ENCODE measurements at regions of chr20 and their contacts with region 1.

Region 1: GRCh38 chr20:3767427-3768341 is at the start of gene ADISSP:
- DNase-seq: peak; percentile 100
- total RNA-seq, gene ADISSP: 9.9 TPM

Region 2: GRCh38 chr20:3710703-3711483 is 56.8 kb before region 1 on chr20:
- intact Hi-C with region 1: loop called (anchors 5 kb)
- DNase-seq: peak; percentile 86

Region 3: DNA sequence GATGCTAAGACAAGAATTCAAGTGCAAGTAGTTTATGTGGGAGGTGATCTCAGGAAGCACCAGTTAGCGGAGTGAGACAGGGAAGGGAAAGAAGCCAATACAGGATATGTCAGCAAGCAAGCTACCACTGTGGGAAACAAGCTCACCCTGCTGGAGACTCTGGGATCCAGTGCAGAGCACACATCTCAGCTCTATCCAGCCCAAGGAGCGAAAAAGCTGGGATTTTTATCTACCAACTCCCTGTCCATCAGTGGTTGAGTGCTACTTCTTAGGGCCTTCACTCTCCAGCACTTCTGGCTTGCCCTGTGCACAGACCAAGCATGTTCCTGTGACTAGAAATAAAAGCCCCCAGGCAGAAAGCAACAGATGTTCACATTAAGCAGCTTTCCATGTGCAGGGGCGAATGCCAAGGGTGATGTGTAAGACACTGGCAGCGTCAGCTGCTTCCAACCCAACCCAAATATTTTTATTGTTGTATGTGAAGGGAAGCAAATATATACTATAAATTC is 258.5 kb after region 1 on chr20:
- intact Hi-C with region 1: no loop called
- DNase-seq: no peak

Measured in cardiac septum (tissue), 1 donor.